Activated CD4-positive, alpha-beta memory T cell treated with anti-CD3 and anti-CD28 coated beads for 36 hours (primary cell): ENCODE measurements at regions of chr1 and their contacts with region 1.

Region 1: GRCh38 chr1:84753516-84754385 is 63.5 kb upstream of the SSX2IP start:
- DNase-seq: peak; percentile 86
- H3K4me3 Mint-ChIP-seq: no peak overlapping the region
- H3K27ac Mint-ChIP-seq: no peak overlapping the region
- H3K4me1 Mint-ChIP-seq: peaks cover 14% of the 10 kb centered on the region
- H3K27me3 Mint-ChIP-seq: peaks cover 27% of the 10 kb centered on the region

Region 2: DNA sequence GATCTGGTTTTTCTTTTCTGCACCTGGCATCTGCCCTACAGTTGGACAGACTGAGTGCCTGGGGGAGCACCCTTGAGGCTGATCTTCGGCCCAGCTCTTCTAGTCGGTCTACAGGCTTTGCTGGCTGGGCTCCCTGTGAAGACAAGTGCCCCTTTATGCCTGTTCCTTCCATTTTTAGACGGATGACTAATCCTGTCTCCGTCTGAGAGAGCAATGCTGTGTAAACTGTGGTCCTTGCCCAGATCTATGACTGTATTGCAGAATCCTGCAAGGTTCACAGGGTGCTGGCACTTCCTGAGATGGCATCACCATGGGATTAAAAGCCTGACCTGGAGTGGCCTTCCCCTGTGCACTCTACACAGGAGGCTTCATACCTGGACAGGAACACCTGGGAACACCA is 499.9 kb before region 1 on chr1:
- CTCF ChIA-PET with region 1: no interaction called
- POLR2A ChIA-PET with region 1: no interaction called
- intact Hi-C with region 1: no loop called
- DNase-seq: no peak
- H3K4me3 Mint-ChIP-seq: no peak overlapping the region
- H3K27ac Mint-ChIP-seq: no peak overlapping the region
- H3K4me1 Mint-ChIP-seq: no peaks in the 10 kb centered on the region
- H3K27me3 Mint-ChIP-seq: no peaks in the 10 kb centered on the region

Region 3: GRCh38 chr1:84433258-84434080 is 320.3 kb before region 1 on chr1:
- CTCF ChIA-PET with region 1: interaction called, 10 read pairs
- POLR2A ChIA-PET with region 1: no interaction called
- intact Hi-C with region 1: loop called (anchors 2 kb)
- DNase-seq: peak; percentile 63
- H3K4me3 Mint-ChIP-seq: peak overlapping the region; percentile 48
- H3K27ac Mint-ChIP-seq: peak overlapping the region; percentile 11
- H3K4me1 Mint-ChIP-seq: peaks cover 13% of the 10 kb centered on the region
- H3K27me3 Mint-ChIP-seq: no peaks in the 10 kb centered on the region

Region 4: GRCh38 chr1:84668185-84668584 is 85.6 kb before region 1 on chr1:
- CTCF ChIA-PET with region 1: interaction called, 8 read pairs
- POLR2A ChIA-PET with region 1: no interaction called
- intact Hi-C with region 1: loop called (anchors 1 kb)
- DNase-seq: no peak
- H3K4me3 Mint-ChIP-seq: no peak overlapping the region
- H3K27ac Mint-ChIP-seq: no peak overlapping the region
- H3K4me1 Mint-ChIP-seq: peaks cover 2% of the 10 kb centered on the region
- H3K27me3 Mint-ChIP-seq: no peaks in the 10 kb centered on the region

Region 5: GRCh38 chr1:84724128-84724860 is 29.5 kb before region 1 on chr1:
- CTCF ChIA-PET with region 1: interaction called, 16 read pairs
- POLR2A ChIA-PET with region 1: no interaction called
- intact Hi-C with region 1: no loop called
- DNase-seq: peak; percentile 71
- H3K4me3 Mint-ChIP-seq: no peak overlapping the region
- H3K27ac Mint-ChIP-seq: no peak overlapping the region
- H3K4me1 Mint-ChIP-seq: peaks cover 14% of the 10 kb centered on the region
- H3K27me3 Mint-ChIP-seq: no peaks in the 10 kb centered on the region

Region 6: DNA sequence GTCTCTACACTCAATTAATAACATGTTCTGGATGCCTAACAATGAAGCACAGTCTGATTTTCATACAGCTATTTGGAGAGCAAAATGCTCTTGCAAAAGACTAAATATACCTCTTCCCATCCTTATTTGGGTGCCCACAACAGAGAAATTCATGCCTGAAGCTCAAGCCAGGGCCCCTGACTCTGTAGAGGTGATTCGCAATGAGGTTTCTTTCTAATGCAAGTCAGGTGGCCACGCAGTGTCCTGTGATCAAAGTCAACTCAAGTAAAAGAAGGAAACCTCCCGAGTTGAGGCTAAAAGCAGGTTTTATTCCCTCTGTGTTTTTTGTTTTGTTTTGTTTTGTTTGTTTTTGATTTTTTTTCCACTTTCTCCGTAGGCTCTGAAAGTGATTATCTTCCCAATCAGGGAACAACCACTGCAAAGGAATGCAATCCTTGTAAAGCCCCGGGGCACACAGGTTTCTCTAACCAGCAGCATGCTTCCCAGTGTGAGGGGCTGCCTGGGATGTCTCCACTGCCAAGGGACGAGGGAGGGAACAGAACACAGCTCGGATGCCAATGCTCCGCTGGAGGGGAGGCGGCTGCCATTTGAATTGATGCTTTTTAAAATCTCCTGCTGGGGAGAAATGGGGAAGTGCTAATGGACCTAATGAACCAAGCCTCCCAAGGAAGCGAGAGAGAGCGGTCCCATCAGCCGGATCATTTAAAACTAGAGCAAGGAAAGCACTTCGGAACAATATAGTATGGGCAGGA is 10.3 kb after region 1 on chr1:
- CTCF ChIA-PET with region 1: interaction called, 15 read pairs
- POLR2A ChIA-PET with region 1: no interaction called
- intact Hi-C with region 1: no loop called
- DNase-seq: no peak
- H3K4me3 Mint-ChIP-seq: no peak overlapping the region
- H3K27ac Mint-ChIP-seq: no peak overlapping the region
- H3K4me1 Mint-ChIP-seq: peaks cover 2% of the 10 kb centered on the region
- H3K27me3 Mint-ChIP-seq: peaks cover 13% of the 10 kb centered on the region

Region 7: GRCh38 chr1:84936116-84936810 is 182.5 kb after region 1 on chr1:
- CTCF ChIA-PET with region 1: interaction called, 10 read pairs
- POLR2A ChIA-PET with region 1: no interaction called
- intact Hi-C with region 1: loop called (anchors 1 kb)
- DNase-seq: peak; percentile 27
- H3K4me3 Mint-ChIP-seq: no peak overlapping the region
- H3K27ac Mint-ChIP-seq: no peak overlapping the region
- H3K4me1 Mint-ChIP-seq: peaks cover 4% of the 10 kb centered on the region
- H3K27me3 Mint-ChIP-seq: no peaks in the 10 kb centered on the region

Region 8: GRCh38 chr1:85550784-85551516 is 797.2 kb after region 1 on chr1:
- CTCF ChIA-PET with region 1: no interaction called
- POLR2A ChIA-PET with region 1: no interaction called
- intact Hi-C with region 1: no loop called
- DNase-seq: no peak
- H3K4me3 Mint-ChIP-seq: no peak overlapping the region
- H3K27ac Mint-ChIP-seq: no peak overlapping the region
- H3K4me1 Mint-ChIP-seq: no peaks in the 10 kb centered on the region
- H3K27me3 Mint-ChIP-seq: peaks cover 11% of the 10 kb centered on the region